WTC11 (cell line): ENCODE measurements at regions of chr12 and their contacts with region 1.

Region 1: GRCh38 chr12:3275171-3276041 is 198.2 kb downstream of the TSPAN9 start:
- DNase-seq: peak; percentile 88
- ATAC-seq: peak; percentile 79
- H3K4me3 Mint-ChIP-seq: peak overlapping the region; percentile 59
- H3K27ac Mint-ChIP-seq: no peak overlapping the region
- H3K4me1 Mint-ChIP-seq: peaks cover 20% of the 10 kb centered on the region
- H3K27me3 Mint-ChIP-seq: no peaks in the 10 kb centered on the region
- CTCF ChIP-seq: peak; percentile 97

Region 2: DNA sequence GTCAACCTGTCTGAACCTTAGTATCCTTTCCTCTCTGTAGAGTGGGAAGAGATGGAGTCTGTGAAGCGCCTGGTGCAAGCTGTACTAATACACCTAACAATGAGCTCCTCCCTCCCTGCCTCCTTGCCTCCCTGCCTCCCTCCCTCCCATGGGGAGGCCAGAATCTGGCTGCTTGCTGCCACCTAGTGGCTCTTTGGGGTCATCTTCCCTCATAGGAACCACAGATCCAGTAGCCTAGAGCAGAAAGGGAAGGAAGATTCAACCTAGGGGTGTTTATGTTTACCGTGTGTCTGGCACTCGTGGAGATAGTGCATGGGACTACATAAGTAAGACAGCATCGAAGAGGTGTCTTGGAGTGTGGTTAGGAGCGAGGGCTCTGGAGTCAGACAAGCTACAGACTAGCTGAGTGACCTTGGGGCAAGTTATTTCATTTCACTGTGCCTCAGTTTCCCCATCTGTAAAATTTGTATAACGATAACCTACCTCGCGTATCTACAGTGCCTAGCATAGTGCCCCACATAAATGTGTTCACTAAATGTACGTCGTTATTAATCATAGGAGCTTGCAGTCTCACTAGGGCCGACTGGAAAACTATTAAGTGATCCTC is 233.7 kb before region 1 on chr12:
- CTCF ChIA-PET with region 1: interaction called, 13 read pairs
- POLR2A ChIA-PET with region 1: no interaction called
- DNase-seq: peak; percentile 76
- ATAC-seq: peak; percentile 68
- H3K4me3 Mint-ChIP-seq: no peak overlapping the region
- H3K27ac Mint-ChIP-seq: 0 out of 2 replicates have a peak overlapping the region, but pooled peaks have one; percentile 19
- H3K4me1 Mint-ChIP-seq: peaks cover 4% of the 10 kb centered on the region; the same call in 1 of the 2 replicates
- H3K27me3 Mint-ChIP-seq: no peaks in the 10 kb centered on the region
- CTCF ChIP-seq: peak; percentile 62; the same call in 1 of the 2 replicates

Region 3: DNA sequence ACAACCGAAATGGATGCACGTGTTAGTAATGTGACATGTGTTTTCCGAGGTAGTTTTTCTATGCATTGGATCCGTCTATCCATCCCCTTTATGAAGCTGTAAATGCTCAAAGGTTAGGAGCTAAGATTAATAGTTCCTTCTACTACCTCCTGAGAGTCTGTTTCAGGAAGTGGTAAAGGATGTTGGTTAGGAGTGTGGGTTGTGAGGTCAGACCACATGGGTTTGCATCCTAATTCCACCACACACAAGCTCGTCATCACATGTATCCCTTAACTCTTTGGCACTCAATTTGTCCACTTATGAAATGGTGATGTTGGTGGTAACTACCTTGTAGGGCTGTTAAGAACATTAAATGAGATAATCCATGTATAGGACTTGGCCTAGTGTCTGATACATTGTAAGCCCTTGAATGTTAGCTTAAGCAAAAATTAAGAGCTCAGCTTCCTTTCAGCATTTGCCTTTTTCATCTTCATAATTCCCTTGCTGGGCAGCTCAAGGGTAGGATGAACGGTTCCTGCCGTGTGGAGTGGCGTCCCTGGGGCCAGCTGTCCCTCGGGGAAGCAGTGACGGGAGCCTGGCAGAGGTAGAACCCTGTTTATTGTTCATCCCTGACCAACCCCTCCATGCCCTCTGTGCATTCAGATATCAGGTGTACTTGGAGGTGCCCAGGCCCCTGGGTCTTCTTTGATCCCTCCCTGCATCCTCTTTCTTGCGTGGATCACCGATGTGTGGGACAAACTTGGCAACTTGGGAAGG is 145.9 kb before region 1 on chr12:
- CTCF ChIA-PET with region 1: interaction called, 168 read pairs
- POLR2A ChIA-PET with region 1: no interaction called
- DNase-seq: no peak
- ATAC-seq: no peak
- H3K4me3 Mint-ChIP-seq: no peak overlapping the region
- H3K27ac Mint-ChIP-seq: no peak overlapping the region
- H3K4me1 Mint-ChIP-seq: peaks cover 25% of the 10 kb centered on the region
- H3K27me3 Mint-ChIP-seq: no peaks in the 10 kb centered on the region
- CTCF ChIP-seq: no peak

Region 4: DNA sequence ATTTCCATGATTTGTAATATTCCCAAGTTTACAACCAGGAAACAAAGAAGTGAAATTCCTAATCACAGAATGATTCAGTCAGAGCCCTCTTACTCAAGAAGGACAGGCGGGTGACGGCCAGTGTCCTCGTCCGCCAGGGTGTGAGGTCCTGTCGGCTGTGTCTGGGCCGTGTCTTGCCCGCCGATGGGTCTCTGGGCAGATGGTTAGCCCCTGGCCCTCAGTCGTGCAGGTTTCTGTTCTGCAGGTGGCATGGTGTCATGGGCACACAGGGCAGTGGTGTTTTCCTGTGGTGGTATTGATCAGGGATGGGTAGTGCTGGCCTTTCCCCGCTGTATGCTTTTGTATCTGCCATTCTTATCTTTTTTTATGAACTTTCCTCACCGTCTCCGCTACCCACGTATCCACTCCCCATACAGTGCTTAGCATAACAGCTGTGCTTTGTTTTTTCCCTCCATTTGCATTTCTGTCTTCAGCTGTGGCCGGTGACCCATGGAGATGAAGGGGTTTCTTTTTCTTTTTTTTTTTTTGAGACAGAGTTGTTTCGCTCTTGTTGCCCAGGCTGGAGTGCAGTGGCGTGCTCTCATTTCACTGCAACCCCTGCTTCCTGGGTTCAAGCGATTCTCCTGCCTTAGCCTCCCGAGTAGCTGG is 97.5 kb before region 1 on chr12:
- CTCF ChIA-PET with region 1: interaction called, 13 read pairs
- POLR2A ChIA-PET with region 1: no interaction called
- DNase-seq: no peak
- ATAC-seq: no peak
- H3K4me3 Mint-ChIP-seq: no peak overlapping the region
- H3K27ac Mint-ChIP-seq: peak overlapping the region; percentile 57; the same call in 1 of the 2 replicates
- H3K4me1 Mint-ChIP-seq: peaks cover 44% of the 10 kb centered on the region
- H3K27me3 Mint-ChIP-seq: no peaks in the 10 kb centered on the region
- CTCF ChIP-seq: no peak

Region 5: DNA sequence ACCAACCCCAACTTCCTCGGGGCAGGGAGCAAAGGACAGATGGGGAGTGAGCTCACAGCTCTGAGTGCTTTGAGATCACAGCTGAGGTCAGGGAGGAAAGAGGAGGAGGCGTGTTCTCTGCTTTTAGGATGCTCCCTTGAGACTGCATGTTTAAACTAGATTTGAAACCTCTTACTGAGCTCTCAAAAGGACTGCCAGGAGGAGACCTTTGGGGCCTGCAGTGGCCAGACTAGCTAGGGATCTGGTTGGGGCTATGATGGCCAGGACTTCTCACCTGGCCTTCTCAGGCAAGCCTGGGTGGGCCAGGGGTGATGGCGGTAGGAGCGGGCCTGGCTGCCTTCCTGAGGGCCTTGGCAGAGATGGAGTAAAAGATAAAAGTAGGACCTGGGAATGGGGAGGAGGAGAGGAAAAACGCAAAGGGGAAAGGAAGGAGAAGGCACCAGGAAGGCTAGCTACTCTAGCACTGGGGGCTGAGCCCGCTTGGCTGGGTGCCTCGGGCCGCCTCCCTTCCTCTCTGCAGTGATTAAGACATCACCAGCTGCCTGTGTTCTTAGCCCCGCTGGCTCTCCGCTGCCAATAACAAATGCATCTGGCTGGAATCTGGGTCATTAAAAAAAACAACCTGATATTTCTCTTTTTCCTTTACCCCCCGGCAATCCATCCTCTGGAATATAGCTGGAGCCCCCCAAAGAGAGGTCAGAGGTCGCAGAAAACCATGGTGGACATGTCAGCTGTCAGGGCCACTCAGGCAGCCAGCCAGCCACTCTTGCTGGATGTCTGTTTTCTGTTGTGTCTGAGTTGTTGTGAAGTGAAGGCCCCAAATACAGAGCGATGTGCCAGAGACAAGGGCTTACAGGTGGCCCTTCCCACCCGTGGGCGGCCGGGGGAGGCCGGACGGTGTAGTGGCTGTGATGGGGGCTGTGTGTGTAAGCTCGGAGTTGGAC is 56.9 kb before region 1 on chr12:
- CTCF ChIA-PET with region 1: interaction called, 47 read pairs
- POLR2A ChIA-PET with region 1: no interaction called
- DNase-seq: no peak
- ATAC-seq: no peak
- H3K4me3 Mint-ChIP-seq: no peak overlapping the region
- H3K27ac Mint-ChIP-seq: peak overlapping the region; percentile 51
- H3K4me1 Mint-ChIP-seq: peaks cover 20% of the 10 kb centered on the region
- H3K27me3 Mint-ChIP-seq: no peaks in the 10 kb centered on the region
- CTCF ChIP-seq: no peak

Region 6: DNA sequence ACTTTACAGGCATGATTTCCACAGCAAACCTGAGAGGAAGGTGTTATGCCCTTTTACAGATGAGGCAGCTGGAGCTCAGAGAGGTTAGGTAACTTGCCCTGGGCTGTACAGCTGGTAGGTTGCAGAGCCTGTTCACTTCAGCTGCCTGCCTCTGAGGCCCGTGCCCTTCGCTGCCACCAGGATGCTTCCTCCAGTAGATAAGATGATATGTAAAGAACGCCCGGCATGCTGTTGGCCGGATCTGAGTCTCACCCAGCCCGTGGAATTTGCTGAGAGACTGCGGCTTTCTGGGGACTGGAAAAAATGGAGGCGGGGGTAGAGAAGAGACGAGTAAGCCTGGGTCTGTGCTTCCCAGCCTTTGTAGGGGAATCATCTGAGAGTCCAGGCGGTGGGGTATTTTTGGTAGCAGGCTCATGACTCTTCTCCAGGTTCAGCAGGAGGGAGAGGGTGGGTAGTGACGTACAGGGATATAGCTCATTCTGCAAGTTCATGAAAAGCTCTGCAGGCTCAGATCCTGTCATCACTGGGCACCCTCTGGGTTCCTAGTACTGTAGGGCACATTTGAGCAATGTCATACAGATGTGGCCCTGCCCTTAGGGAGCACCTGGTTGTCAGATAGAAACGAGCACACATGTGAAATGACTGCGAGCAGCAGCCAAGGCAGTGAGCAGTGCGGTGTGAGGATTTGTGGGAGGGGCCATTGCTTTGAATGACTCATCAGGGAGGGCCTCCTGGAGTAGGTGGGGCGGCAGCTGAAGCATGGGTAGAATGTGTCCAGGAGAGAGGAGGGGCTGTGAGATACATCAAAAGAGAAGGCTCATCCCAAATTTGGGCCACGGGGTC is 38.8 kb before region 1 on chr12:
- CTCF ChIA-PET with region 1: interaction called, 20 read pairs
- POLR2A ChIA-PET with region 1: no interaction called
- DNase-seq: peak; percentile 52
- ATAC-seq: peak; percentile 94
- H3K4me3 Mint-ChIP-seq: no peak overlapping the region
- H3K27ac Mint-ChIP-seq: no peak overlapping the region
- H3K4me1 Mint-ChIP-seq: peaks cover 41% of the 10 kb centered on the region
- H3K27me3 Mint-ChIP-seq: no peaks in the 10 kb centered on the region
- CTCF ChIP-seq: no peak

Region 7: GRCh38 chr12:3293446-3294161 is 18.2 kb after region 1 on chr12:
- CTCF ChIA-PET with region 1: interaction called, 41 read pairs
- POLR2A ChIA-PET with region 1: no interaction called
- DNase-seq: no peak
- ATAC-seq: no peak
- H3K4me3 Mint-ChIP-seq: no peak overlapping the region
- H3K27ac Mint-ChIP-seq: no peak overlapping the region; the same call in 1 of the 2 replicates
- H3K4me1 Mint-ChIP-seq: no peaks in the 10 kb centered on the region
- H3K27me3 Mint-ChIP-seq: no peaks in the 10 kb centered on the region
- CTCF ChIP-seq: no peak

Region 8: GRCh38 chr12:3418609-3419390 is 143.4 kb after region 1 on chr12:
- CTCF ChIA-PET with region 1: no interaction called
- POLR2A ChIA-PET with region 1: no interaction called
- DNase-seq: no peak
- ATAC-seq: no peak
- H3K4me3 Mint-ChIP-seq: no peak overlapping the region
- H3K27ac Mint-ChIP-seq: no peak overlapping the region
- H3K4me1 Mint-ChIP-seq: peaks cover 27% of the 10 kb centered on the region
- H3K27me3 Mint-ChIP-seq: peaks cover 39% of the 10 kb centered on the region
- CTCF ChIP-seq: no peak